CD4-positive, alpha-beta T cell (primary cell): ENCODE measurements at regions of chr3 and their contacts with region 1.

Region 1: DNA sequence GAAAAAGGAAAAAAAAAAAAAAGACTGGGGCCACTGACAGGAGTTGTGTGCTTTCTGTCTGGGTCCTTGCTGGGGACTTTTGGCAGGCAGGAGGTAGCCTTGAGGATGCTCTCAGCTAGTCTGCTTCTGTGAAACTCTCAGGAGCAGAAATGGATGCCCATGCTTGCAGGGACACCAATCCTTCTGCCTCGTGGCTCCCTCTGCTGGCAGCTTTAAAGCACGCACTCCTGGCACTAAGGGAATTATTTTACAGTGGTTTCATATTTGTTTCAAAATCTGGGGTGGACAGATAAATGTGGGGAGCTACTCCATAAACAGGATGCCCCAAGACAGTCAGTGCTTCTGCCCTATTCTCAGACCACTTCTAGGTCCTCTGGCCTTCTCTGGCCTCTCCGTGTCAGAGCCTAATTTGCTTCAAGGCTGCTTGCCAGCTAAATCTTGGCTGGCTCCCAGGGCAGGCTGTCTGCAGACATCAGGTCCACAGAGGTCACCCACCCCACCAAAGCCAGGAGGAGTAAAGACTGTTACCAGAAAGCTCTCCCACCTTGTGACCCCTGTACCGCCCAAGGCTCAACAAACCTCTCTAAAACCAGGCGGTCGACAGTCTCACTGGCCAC is 17.1 kb downstream of the TRAIP start:
- DNase-seq: peak; percentile 73 to 91 (median 79)
- ATAC-seq: peak; percentile 99
- H3K4me3 ChIP-seq: no peak overlapping the region
- H3K4me3 Mint-ChIP-seq: no peak overlapping the region
- H3K27ac ChIP-seq: no peak overlapping the region
- H3K27ac Mint-ChIP-seq: no peak overlapping the region
- H3K4me1 ChIP-seq: peaks cover 3% of the 10 kb centered on the region
- H3K4me1 Mint-ChIP-seq: no peaks in the 10 kb centered on the region
- H3K27me3 ChIP-seq: no peaks in the 10 kb centered on the region
- H3K27me3 Mint-ChIP-seq: no peaks in the 10 kb centered on the region
- CTCF ChIP-seq: peak; percentile 84

Region 2: DNA sequence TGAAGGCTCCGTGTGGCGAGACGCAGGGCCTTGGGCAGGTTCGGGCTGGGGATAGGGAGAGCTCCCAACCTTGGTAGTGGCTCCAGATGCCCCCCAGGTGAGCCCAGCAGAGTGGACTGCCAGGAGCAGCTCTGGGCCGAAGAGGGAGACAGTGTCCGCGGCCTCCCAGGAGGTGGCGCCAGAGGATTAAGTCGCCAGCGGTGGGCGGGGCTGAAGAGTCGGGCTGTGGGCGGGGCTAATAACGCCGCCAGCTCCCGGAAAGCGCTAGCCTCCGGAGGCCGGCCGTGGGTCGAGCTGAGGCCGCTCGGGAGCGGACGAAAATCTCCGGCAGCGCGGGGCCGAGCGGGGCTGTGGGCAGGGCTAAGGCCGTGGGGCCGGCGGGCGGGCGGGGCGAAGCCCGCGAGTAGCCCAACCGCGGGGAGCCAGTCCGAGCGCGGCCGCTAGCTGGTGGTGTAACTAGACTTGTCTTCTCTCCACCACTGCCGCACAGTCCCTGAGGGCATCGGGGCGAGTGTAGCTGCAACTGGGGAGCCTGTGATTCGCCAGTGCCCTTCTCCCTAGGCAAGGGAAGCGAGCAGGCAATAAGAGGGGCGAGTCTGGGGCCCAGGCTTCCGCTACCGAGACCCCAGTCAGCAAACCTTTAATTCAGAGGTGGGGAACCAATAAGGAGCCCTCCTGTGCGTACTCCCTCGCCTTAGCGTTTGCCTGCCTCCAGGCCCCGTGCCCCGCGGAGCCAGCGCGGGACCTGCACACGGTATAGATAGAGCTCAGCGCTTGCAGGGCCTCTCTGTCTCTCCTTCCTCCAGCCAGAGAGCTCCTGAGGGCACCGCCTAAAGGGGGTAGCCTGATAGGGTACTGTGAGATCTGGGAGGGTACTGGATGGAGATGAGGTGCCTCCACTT is 299.4 kb before region 1 on chr3:
- CTCF ChIA-PET with region 1: interaction called, 8 read pairs
- POLR2A ChIA-PET with region 1: interaction called, 6 read pairs
- intact Hi-C with region 1: loop called (anchors 1 to 2 kb)
- DNase-seq: peak; percentile 81 to 96 (median 92)
- ATAC-seq: peak; percentile 97
- H3K4me3 ChIP-seq: peak overlapping the region; percentile 61
- H3K4me3 Mint-ChIP-seq: peak overlapping the region; percentile 86
- H3K27ac ChIP-seq: peak overlapping the region; percentile 41 to 53
- H3K27ac Mint-ChIP-seq: peak overlapping the region; percentile 63
- H3K4me1 ChIP-seq: peaks cover 11% of the 10 kb centered on the region
- H3K4me1 Mint-ChIP-seq: no peaks in the 10 kb centered on the region
- H3K27me3 ChIP-seq: no peaks in the 10 kb centered on the region
- H3K27me3 Mint-ChIP-seq: peaks cover 12% of the 10 kb centered on the region
- CTCF ChIP-seq: peak; percentile 91

Region 3: GRCh38 chr3:49703443-49703927 is 135.8 kb before region 1 on chr3:
- CTCF ChIA-PET with region 1: interaction called, 4 read pairs
- POLR2A ChIA-PET with region 1: no interaction called
- intact Hi-C with region 1: loop called (anchors 1 kb)
- DNase-seq: peak; percentile 46 to 85 (median 64)
- ATAC-seq: peak; percentile 100
- H3K4me3 ChIP-seq: no peak overlapping the region
- H3K4me3 Mint-ChIP-seq: no peak overlapping the region
- H3K27ac ChIP-seq: no peak overlapping the region
- H3K27ac Mint-ChIP-seq: no peak overlapping the region
- H3K4me1 ChIP-seq: peaks cover 5% of the 10 kb centered on the region
- H3K4me1 Mint-ChIP-seq: peaks cover 6% of the 10 kb centered on the region
- H3K27me3 ChIP-seq: no peaks in the 10 kb centered on the region
- H3K27me3 Mint-ChIP-seq: no peaks in the 10 kb centered on the region
- CTCF ChIP-seq: peak; percentile 75

Region 4: GRCh38 chr3:49747792-49748480 is 91.4 kb before region 1 on chr3:
- CTCF ChIA-PET with region 1: no interaction called
- POLR2A ChIA-PET with region 1: no interaction called
- intact Hi-C with region 1: no loop called
- DNase-seq: no peak
- ATAC-seq: no peak
- H3K4me3 ChIP-seq: no peak overlapping the region
- H3K4me3 Mint-ChIP-seq: no peak overlapping the region
- H3K27ac ChIP-seq: no peak overlapping the region
- H3K27ac Mint-ChIP-seq: no peak overlapping the region
- H3K4me1 ChIP-seq: no peaks in the 10 kb centered on the region
- H3K4me1 Mint-ChIP-seq: peaks cover 16% of the 10 kb centered on the region
- H3K27me3 ChIP-seq: no peaks in the 10 kb centered on the region
- H3K27me3 Mint-ChIP-seq: no peaks in the 10 kb centered on the region
- CTCF ChIP-seq: no peak

Region 5: DNA sequence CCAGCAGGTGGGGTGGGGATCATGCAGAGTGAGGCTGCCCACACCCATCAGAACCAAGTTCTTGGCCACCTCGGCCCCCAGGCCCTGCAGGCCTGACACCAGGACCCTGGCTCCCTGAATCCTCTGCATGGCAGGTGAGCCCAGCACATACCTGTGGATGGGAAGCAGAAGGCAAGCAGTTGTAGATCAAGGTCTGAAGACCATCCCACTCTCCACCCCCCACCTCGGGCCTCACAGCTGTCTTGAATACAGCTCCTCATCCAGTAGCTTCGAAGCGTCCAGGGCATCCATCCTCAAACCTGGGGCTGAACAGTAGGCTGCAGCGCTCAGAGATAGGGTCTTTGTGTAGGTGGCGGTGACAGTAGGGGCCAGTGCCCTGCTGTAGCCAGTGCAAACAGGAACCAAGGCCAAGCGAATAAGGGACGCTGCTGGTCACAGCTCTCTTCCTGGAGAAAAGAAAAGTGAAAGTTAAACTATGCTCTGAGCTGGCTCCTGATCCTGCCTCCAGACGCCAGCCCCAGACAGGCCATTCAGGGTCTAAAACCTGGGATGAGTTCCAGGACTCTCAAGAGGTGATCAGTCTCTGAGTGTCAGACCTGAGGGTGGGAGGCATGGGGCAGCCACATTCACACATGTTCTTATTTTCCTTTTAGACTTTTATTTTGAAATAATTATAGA is 25.7 kb before region 1 on chr3 and contains the start of gene UBA7:
- CTCF ChIA-PET with region 1: interaction called, 18 read pairs
- POLR2A ChIA-PET with region 1: no interaction called
- intact Hi-C with region 1: no loop called
- DNase-seq: peak in 9 of 14 experiments; percentile 11 to 76 (median 52)
- ATAC-seq: peak; percentile 88
- H3K4me3 ChIP-seq: peak within 1 kb of the TSS; percentile 77
- H3K4me3 Mint-ChIP-seq: peak within 1 kb of the TSS; percentile 97
- H3K27ac ChIP-seq: peak within 1 kb of the TSS; percentile 41 to 71
- H3K27ac Mint-ChIP-seq: peak within 1 kb of the TSS; percentile 97
- H3K4me1 ChIP-seq: peaks cover 37% of the 10 kb centered on the region
- H3K4me1 Mint-ChIP-seq: peaks cover 36% of the 10 kb centered on the region
- H3K27me3 ChIP-seq: no peaks in the 10 kb centered on the region
- H3K27me3 Mint-ChIP-seq: no peaks in the 10 kb centered on the region
- CTCF ChIP-seq: no peak
- total RNA-seq, gene UBA7: 208 to 213 TPM

Region 6: GRCh38 chr3:49856181-49857005 is 17.1 kb after region 1 on chr3 and contains the start of gene TRAIP:
- CTCF ChIA-PET with region 1: interaction called, 17 read pairs
- POLR2A ChIA-PET with region 1: no interaction called
- intact Hi-C with region 1: no loop called
- DNase-seq: peak; percentile 88 to 98 (median 92)
- ATAC-seq: peak; percentile 98
- H3K4me3 ChIP-seq: peak within 1 kb of the TSS; percentile 59
- H3K4me3 Mint-ChIP-seq: peak within 1 kb of the TSS; percentile 83
- H3K27ac ChIP-seq: peak within 1 kb of the TSS; percentile 42 to 63
- H3K27ac Mint-ChIP-seq: peak within 1 kb of the TSS; percentile 85
- H3K4me1 ChIP-seq: peaks cover 18% of the 10 kb centered on the region
- H3K4me1 Mint-ChIP-seq: peaks cover 7% of the 10 kb centered on the region
- H3K27me3 ChIP-seq: no peaks in the 10 kb centered on the region
- H3K27me3 Mint-ChIP-seq: no peaks in the 10 kb centered on the region
- CTCF ChIP-seq: no peak
- total RNA-seq, gene TRAIP: 2.4 TPM

Region 7: GRCh38 chr3:49906004-49906743 is 66.9 kb after region 1 on chr3:
- CTCF ChIA-PET with region 1: interaction called, 9 read pairs
- POLR2A ChIA-PET with region 1: no interaction called
- intact Hi-C with region 1: loop called in 1 of 2 experiments (anchors 5 kb)
- DNase-seq: peak; percentile 15 to 77 (median 40)
- ATAC-seq: peak; percentile 43
- H3K4me3 ChIP-seq: no peak overlapping the region
- H3K4me3 Mint-ChIP-seq: peak overlapping the region; percentile 75
- H3K27ac ChIP-seq: peak overlapping the region in 1 of 2 donors; percentile 32
- H3K27ac Mint-ChIP-seq: peak overlapping the region; percentile 85
- H3K4me1 ChIP-seq: peaks cover 39% of the 10 kb centered on the region
- H3K4me1 Mint-ChIP-seq: peaks cover 33% of the 10 kb centered on the region
- H3K27me3 ChIP-seq: no peaks in the 10 kb centered on the region
- H3K27me3 Mint-ChIP-seq: no peaks in the 10 kb centered on the region
- CTCF ChIP-seq: peak; percentile 57